MCF 10A (cell line): ENCODE measurements at regions of chr1 and their contacts with region 1.

Region 1: GRCh38 chr1:206982216-206982615 is 12.0 kb upstream of the FCAMR start:
- DNase-seq: peak; percentile 81
- H3K4me3 Mint-ChIP-seq: no peak overlapping the region
- H3K27ac Mint-ChIP-seq: no peak overlapping the region
- H3K4me1 Mint-ChIP-seq: no peaks in the 10 kb centered on the region
- H3K27me3 Mint-ChIP-seq: no peaks in the 10 kb centered on the region
- CTCF ChIP-seq: peak; percentile 99

Region 2: DNA sequence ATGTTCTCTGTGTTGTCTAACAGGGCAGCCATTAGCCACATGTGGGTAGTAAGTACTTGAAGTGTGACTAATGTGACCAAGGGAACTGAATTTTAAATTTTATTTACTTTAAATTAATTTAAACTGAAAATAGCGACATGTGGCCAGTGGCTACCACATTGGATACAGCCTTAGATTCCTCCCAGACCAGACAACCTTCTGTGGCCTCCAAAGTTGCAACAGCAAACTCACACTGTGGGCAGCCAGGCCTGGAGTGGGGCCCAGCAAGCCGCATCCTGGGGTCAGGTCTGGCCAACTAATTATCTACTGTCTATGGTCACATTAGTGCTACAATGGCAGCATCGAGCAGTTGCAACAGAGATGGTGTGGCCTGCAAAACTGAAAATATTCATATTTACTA is 381.7 kb before region 1 on chr1:
- CTCF ChIA-PET with region 1: interaction called, 113 read pairs
- POLR2A ChIA-PET with region 1: interaction called, 3 read pairs
- intact Hi-C with region 1: no loop called
- DNase-seq: no peak
- H3K4me3 Mint-ChIP-seq: no peak overlapping the region
- H3K27ac Mint-ChIP-seq: no peak overlapping the region
- H3K4me1 Mint-ChIP-seq: no peaks in the 10 kb centered on the region
- H3K27me3 Mint-ChIP-seq: no peaks in the 10 kb centered on the region
- CTCF ChIP-seq: no peak

Region 3: DNA sequence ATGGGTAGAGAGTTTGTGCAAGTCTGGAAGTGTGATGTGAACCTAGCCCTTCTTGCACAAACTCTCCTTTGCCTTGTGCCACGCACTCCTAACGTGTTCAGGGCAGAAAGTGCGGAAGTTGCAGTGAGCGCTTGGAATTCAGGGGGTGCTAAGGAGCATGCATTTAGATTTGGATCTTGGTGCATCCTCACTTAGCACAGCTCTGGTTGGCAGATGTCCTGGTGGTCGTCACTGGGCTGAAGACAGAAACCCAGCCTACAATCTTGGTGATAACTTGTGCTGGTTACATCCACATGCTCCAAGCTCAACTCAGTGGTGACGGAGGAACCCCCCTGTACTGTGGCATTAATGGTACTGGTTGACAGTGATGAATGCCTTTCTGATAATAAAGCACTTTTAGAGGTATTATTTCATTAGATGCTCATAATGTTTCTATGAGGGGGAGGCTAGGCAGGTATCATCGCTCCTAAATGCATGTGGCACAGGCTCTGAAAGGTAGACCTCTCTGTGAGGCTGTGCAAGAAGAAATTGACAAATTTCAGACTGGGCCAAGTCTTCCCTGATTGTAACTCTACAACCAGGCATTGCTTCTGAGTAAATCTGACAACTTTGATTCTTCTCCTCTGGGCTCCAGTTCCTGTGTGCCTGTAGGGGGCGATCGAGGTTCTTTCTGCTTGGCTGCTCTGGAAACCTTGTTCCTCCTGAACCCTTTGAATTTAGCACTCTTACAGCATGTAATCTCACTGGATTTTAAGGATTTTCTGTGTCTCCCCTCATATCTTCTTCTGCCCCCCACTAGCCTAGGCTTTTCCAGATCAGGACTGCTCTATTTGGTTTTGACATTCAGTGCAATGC is 256.9 kb before region 1 on chr1:
- CTCF ChIA-PET with region 1: interaction called, 64 read pairs
- POLR2A ChIA-PET with region 1: interaction called, 4 read pairs
- intact Hi-C with region 1: no loop called
- DNase-seq: peak; percentile 78
- H3K4me3 Mint-ChIP-seq: no peak overlapping the region
- H3K27ac Mint-ChIP-seq: no peak overlapping the region
- H3K4me1 Mint-ChIP-seq: peaks cover 57% of the 10 kb centered on the region
- H3K27me3 Mint-ChIP-seq: no peaks in the 10 kb centered on the region
- CTCF ChIP-seq: peak; percentile 54

Region 4: GRCh38 chr1:206865013-206865671 is 117.1 kb before region 1 on chr1 and contains the start of gene IL20:
- CTCF ChIA-PET with region 1: interaction called, 20 read pairs
- POLR2A ChIA-PET with region 1: no interaction called
- intact Hi-C with region 1: no loop called
- DNase-seq: peak; percentile 100
- H3K4me3 Mint-ChIP-seq: no peak within 1 kb of the TSS
- H3K27ac Mint-ChIP-seq: no peak within 1 kb of the TSS
- H3K4me1 Mint-ChIP-seq: peaks cover 32% of the 10 kb centered on the region
- H3K27me3 Mint-ChIP-seq: peaks cover 17% of the 10 kb centered on the region
- CTCF ChIP-seq: peak; percentile 100
- total RNA-seq, gene IL20: not detected in 2 replicates

Region 5: DNA sequence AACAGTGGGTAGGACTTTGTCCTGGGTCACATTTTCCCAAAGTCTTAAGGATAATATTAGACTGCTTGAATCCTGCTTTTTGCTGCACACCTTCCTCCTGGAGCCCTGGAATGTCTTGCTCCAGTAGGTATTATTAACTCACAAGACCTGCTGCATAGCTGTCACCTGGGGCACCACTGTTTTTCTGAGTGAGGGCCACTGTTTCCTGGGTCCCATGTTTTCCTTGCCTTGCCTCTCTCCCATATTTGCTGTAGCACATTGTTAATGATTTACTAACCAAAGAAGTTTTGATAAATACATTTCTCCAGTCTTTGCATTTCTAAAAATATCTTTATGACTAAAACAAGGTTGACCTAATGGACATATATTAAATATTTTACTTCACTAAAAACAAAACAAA is 10.6 kb after region 1 on chr1:
- CTCF ChIA-PET with region 1: interaction called, 98 read pairs
- POLR2A ChIA-PET with region 1: interaction called, 5 read pairs
- intact Hi-C with region 1: no loop called
- DNase-seq: no peak
- H3K4me3 Mint-ChIP-seq: no peak overlapping the region
- H3K27ac Mint-ChIP-seq: no peak overlapping the region
- H3K4me1 Mint-ChIP-seq: no peaks in the 10 kb centered on the region
- H3K27me3 Mint-ChIP-seq: no peaks in the 10 kb centered on the region
- CTCF ChIP-seq: no peak

Region 6: DNA sequence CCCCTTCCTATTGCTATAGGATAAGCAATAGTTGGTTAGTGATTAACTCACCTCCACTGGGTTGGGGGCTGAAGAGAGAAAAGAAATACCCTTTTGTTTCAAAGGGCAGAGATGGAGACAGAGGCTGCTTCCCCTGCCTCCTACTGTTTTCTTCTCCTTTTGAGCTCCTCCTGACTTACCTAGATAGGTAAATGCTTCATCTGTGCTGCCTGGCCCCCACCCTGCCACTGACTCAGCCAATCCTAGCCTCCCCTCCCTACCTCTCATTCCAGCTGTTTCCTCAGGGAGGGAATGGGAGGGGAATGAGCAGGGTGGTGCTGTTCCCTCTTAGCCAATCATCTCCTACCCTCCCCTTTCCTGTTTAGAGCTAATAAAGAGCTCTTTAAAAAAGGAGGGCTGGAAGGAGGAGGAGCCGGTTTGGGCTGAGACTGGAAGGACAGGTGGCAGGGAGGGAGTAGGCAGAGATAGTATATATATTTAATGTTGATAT is 50.4 kb after region 1 on chr1 and contains the start of gene C1orf116:
- CTCF ChIA-PET with region 1: interaction called, 36 read pairs
- POLR2A ChIA-PET with region 1: interaction called, 26 read pairs
- intact Hi-C with region 1: no loop called
- DNase-seq: peak; percentile 98
- H3K4me3 Mint-ChIP-seq: peak within 1 kb of the TSS; percentile 75
- H3K27ac Mint-ChIP-seq: peak within 1 kb of the TSS; percentile 86
- H3K4me1 Mint-ChIP-seq: peaks cover 79% of the 10 kb centered on the region
- H3K27me3 Mint-ChIP-seq: no peaks in the 10 kb centered on the region
- CTCF ChIP-seq: no peak
- total RNA-seq, gene C1orf116: 35.4 and 35.5 TPM in 2 replicates